OCI-LY7 (cell line): ENCODE measurements at regions of chrX and their contacts with region 1.

Region 1: GRCh38 chrX:11143931-11144678 is 33.0 kb downstream of the HCCS start:
- DNase-seq: peak; percentile 79
- H3K4me3 ChIP-seq: no peak overlapping the region
- H3K27ac ChIP-seq: no peak overlapping the region
- H3K4me1 ChIP-seq: peaks cover 9% of the 10 kb centered on the region
- CTCF ChIP-seq: peak; percentile 73

Region 2: DNA sequence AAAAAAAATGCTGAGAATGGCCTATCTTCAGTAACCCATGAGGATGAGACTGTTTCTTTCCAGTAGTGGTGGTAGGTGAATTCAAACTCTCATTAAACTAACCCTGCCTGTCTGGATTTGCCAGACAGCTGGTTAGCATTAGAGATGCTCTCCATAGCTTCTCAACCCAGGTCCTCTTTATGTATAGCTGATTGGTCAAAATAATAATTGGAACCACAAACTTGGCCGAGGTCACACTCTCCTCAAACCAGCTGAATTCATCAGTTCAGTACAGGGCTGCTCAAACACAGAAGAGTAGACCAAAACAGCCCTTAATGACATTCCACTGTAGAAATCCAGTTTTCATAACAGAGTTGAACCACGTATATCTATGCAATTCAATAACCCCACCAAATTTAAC is 52.4 kb after region 1 on chrX:
- CTCF ChIA-PET with region 1: no interaction called
- POLR2A ChIA-PET with region 1: no interaction called
- intact Hi-C with region 1: no loop called
- DNase-seq: no peak
- H3K4me3 ChIP-seq: no peak overlapping the region
- H3K27ac ChIP-seq: no peak overlapping the region
- H3K4me1 ChIP-seq: no peaks in the 10 kb centered on the region
- CTCF ChIP-seq: no peak

Region 3: DNA sequence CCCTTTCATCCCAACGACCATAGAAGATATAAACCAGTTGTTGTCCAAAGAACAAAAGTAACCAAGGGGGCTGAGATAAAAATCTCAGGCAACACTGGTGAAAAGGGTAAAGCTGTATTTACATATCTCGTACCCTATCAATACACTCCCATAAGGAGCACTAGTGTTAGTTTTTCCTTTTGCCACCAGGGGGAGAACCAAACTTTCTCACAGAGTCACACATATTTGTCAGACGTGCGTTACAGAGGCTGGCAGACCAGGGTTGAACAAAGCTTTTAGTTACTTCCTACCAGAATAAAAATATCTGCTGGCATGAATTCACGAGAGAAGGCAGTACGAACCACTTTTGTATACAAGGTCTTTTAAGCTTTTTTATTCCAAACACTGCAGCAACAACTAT is 237.4 kb after region 1 on chrX:
- CTCF ChIA-PET with region 1: no interaction called
- POLR2A ChIA-PET with region 1: no interaction called
- intact Hi-C with region 1: loop called (anchors 5 kb)
- DNase-seq: peak; percentile 54
- H3K4me3 ChIP-seq: no peak overlapping the region
- H3K27ac ChIP-seq: no peak overlapping the region
- H3K4me1 ChIP-seq: no peaks in the 10 kb centered on the region
- CTCF ChIP-seq: peak; percentile 73

Region 4: GRCh38 chrX:11446331-11446730 is 302.2 kb after region 1 on chrX:
- CTCF ChIA-PET with region 1: no interaction called
- POLR2A ChIA-PET with region 1: no interaction called
- intact Hi-C with region 1: loop called (anchors 2 kb)
- DNase-seq: no peak
- H3K4me3 ChIP-seq: no peak overlapping the region
- H3K27ac ChIP-seq: no peak overlapping the region
- H3K4me1 ChIP-seq: no peaks in the 10 kb centered on the region
- CTCF ChIP-seq: no peak

Region 5: GRCh38 chrX:11533211-11533651 is 389.1 kb after region 1 on chrX:
- CTCF ChIA-PET with region 1: no interaction called
- POLR2A ChIA-PET with region 1: no interaction called
- intact Hi-C with region 1: loop called (anchors 1 kb)
- DNase-seq: peak; percentile 84
- H3K4me3 ChIP-seq: no peak overlapping the region
- H3K27ac ChIP-seq: no peak overlapping the region
- H3K4me1 ChIP-seq: peaks cover 15% of the 10 kb centered on the region
- CTCF ChIP-seq: peak; percentile 97

Region 6: DNA sequence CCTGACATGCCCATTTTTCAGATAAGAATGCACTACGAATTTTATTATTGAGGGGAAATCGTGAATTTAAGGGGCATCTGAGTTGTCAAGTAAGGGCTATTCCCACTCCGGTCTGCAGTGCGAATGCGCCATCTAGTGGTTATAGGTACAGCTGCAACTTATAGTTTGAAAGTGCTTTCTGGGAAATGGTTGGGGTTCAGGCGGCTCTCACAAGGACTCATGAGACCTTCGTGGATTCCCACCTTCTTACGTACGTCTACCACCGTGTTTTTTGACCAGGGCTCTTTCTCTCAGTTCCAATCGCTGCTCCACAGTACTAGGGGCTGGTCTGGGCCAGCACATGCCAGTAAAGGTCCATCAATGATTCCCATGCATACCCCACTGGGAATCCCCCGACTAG is 626.2 kb after region 1 on chrX:
- CTCF ChIA-PET with region 1: no interaction called
- POLR2A ChIA-PET with region 1: no interaction called
- intact Hi-C with region 1: loop called (anchors 5 kb)
- DNase-seq: peak; percentile 64
- H3K4me3 ChIP-seq: no peak overlapping the region
- H3K27ac ChIP-seq: no peak overlapping the region
- H3K4me1 ChIP-seq: peaks cover 3% of the 10 kb centered on the region
- CTCF ChIP-seq: peak; percentile 80